Endothelial cell of umbilical vein (primary cell): ENCODE measurements at regions of chr1 and their contacts with region 1.

Region 1: DNA sequence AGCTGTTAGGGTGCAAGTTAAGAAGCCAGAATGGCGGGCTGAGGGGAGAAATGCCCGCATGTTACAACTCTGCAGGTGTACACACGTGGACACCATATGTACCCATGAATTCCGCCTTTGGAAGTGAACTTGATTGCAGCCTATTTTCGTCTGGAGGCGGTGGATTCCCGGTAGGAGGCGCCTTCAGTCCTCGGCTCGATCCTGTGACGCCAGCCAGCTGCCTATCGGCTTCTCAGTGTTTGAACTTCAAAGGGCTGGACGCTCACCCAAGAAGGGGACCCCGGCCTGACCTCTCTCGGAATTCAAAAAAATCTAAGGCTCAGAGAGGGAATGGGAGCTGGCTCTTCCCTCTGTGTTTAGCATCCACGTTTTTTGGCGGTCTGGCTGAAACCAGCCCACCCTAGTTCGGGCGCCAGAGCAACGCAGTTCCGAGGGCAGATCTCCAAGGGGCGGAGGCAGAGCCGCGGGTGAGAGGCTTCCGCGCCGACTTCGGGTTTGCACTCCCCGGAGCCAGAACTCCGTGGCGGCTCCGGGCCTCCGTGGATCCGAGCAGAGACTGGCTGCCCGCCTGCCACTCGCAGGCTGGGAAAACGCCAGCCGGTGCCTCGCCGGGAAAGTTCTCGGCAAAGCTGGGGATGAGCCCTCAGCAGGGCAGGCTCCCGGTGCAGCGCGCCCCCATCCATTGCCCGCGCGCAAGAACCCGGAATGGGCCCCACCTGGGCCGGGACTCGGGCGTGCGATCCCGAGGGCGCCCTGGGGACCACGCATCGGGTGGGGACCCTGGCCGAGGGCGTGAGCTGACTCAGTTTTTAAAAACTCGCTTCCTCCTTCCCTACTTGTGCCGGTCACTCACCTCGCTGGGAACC is 996 bp upstream of the TMEM51 start:
- DNase-seq: peak; percentile 89
- H3K4me3 ChIP-seq: peak overlapping the region; percentile 42 to 70 (median 53)
- H3K27ac ChIP-seq: peak overlapping the region; percentile 20
- H3K4me1 ChIP-seq: peaks cover 16% of the 10 kb centered on the region
- H3K27me3 ChIP-seq: peaks cover 9 to 12% of the 10 kb centered on the region in 2 experiments
- CTCF ChIP-seq: peak; percentile 71 to 81
- POLR2A ChIP-seq: no peak

Region 2: DNA sequence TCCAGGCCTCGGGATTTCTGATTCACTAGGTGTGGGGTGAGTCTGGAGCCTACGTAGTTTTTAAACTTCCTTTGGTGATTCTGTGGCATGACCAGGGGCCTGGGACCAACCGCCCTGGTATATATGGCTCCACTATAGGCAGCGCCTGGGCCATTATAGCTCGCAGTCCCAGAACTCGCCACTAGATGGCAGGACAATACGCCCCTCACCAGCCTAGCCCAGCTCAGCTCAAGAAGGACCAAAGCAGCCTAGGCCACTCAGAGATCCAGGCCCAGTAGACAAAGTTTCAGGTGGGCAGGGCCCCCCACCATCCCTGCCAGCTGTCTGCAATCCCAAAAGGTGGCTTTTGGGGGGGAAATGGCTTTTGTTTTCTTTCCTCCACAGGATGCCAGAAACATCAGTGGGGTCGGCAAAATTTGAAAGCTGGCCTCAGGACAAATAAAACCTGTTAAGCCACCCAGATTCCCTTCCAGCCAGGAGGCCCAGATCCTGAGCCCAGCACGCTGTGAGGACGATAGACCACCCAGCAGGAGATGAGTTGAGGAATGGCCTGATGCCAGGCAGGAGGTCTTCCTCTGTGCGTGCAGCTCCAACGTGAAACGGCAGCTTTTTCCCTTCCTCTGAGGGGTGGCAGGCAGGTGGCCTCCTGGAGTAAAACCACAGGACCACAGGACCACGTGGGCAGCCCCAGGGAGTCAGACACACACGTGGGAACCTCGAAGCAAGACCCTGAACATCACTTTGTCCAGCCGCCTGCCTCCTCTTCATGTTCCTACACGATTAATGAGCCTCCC is 23.8 kb before region 1 on chr1:
- CTCF ChIA-PET with region 1: interaction called, 77 read pairs
- POLR2A ChIA-PET with region 1: no interaction called
- dilution Hi-C with region 1: no loop called
- intact Hi-C with region 1: no loop called
- DNase-seq: peak; percentile 78
- H3K4me3 ChIP-seq: no peak overlapping the region
- H3K27ac ChIP-seq: no peak overlapping the region
- H3K4me1 ChIP-seq: no peaks in the 10 kb centered on the region
- H3K27me3 ChIP-seq: no peaks in the 10 kb centered on the region
- CTCF ChIP-seq: peak; percentile 92
- POLR2A ChIP-seq: no peak

Region 3: GRCh38 chr1:15196807-15197530 is 44.4 kb after region 1 on chr1:
- CTCF ChIA-PET with region 1: interaction called, 9 read pairs
- POLR2A ChIA-PET with region 1: no interaction called
- dilution Hi-C with region 1: no loop called
- intact Hi-C with region 1: loop called (anchors 1 kb)
- DNase-seq: no peak
- H3K4me3 ChIP-seq: no peak overlapping the region
- H3K27ac ChIP-seq: no peak overlapping the region
- H3K4me1 ChIP-seq: peaks cover 14% of the 10 kb centered on the region
- H3K27me3 ChIP-seq: no peaks in the 10 kb centered on the region
- CTCF ChIP-seq: no peak
- POLR2A ChIP-seq: no peak

Region 4: DNA sequence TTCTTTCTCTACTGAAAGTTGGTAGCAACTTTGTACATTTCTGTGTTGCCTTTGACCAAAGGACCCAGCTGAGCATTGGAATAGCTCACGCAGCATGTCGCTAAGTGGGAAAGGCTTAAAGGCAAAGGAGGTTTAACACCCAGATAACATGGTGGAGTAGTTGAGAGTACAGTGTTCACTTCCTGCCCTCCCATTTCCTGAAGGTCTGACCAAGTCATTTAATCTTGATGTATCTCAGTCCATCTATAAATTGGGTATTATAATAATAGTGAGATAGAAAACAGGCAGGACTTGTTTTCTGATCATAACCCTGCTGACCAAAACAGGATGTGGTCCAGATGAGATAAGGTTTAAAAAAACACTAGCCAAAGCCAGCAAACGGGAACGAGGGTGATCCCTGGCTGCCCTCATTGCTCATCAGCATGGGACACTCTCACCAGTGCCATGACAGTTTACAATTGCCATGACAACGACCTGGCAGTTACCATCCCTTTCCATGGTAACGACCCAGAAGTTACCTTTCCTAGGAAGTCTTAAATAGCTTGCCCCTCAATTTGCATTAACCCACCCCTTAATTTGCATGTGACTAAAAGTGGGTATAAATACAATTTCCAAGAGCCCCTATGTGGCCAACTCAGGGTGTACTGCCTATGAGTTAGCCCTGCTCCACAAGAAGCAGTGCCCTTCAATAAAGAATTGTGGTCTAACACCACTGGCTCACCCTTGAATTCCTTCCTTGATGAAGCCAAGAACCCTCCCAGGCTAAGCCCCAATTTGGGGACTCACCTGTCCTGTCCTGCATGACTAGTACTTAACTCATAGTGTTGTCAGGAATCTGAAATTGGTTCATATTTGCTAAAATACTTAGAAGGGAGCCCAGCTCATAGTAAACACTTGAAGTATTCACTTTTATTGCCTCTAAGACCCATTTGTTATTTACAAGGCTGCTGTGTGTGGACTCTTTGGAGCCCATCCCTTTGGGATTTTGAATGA is 66.0 kb after region 1 on chr1:
- CTCF ChIA-PET with region 1: interaction called, 10 read pairs
- POLR2A ChIA-PET with region 1: no interaction called
- dilution Hi-C with region 1: no loop called
- intact Hi-C with region 1: loop called (anchors 1 kb)
- DNase-seq: peak; percentile 98
- H3K4me3 ChIP-seq: no peak overlapping the region
- H3K27ac ChIP-seq: peak overlapping the region; percentile 42
- H3K4me1 ChIP-seq: peaks cover 15% of the 10 kb centered on the region
- H3K27me3 ChIP-seq: no peaks in the 10 kb centered on the region
- CTCF ChIP-seq: no peak
- POLR2A ChIP-seq: peak; percentile 54

Region 5: DNA sequence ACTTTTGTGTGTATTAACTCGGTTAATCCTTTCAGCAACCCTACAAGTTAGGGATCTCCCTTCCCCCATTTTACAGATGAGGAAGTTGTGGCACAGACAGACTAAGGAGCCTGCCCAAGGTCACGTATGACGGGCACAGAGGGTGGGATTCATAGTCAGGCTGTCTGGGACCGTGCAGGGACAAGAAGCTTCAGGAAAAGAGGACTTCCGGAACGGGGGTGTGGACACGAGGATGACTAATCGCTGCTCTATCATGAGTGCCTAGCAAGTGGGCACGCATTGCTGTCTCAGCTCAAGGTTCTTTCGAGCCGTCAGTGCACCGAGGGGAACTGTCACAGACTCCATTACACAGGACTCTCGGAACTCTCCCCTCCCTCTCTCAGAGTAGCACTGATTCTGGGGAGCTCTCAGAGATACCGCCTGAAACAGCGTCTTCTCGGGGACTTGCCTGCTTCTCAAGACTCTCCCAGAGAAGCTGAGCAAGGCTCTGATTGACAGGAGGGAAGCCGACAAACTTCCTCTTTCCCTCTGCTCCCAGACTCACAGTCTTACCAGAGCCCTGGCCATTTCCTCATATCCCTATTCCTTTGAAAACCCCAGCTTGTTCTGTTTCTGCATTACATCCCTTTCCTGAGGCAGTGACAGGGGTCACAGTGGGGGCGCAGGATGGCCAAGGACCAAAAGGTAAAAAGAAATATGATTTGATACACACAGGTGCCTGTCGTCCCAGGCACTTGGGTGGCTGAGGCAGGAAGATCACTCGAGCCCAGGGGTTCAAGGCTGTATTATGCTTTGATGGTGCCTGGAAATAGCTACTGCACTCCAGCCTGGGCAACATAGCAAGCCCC is 108.8 kb after region 1 on chr1:
- CTCF ChIA-PET with region 1: interaction called, 25 read pairs
- POLR2A ChIA-PET with region 1: no interaction called
- dilution Hi-C with region 1: no loop called
- intact Hi-C with region 1: loop called (anchors 1 kb)
- DNase-seq: peak; percentile 74
- H3K4me3 ChIP-seq: peak overlapping the region in 2 of 3 experiments; percentile 6 to 25
- H3K27ac ChIP-seq: peak overlapping the region; percentile 78
- H3K4me1 ChIP-seq: peaks cover 23% of the 10 kb centered on the region
- H3K27me3 ChIP-seq: peaks cover 0 to 5% of the 10 kb centered on the region in 2 experiments
- CTCF ChIP-seq: no peak
- POLR2A ChIP-seq: no peak

Region 6: GRCh38 chr1:15304701-15305467 is 152.3 kb after region 1 on chr1:
- CTCF ChIA-PET with region 1: interaction called, 21 read pairs
- POLR2A ChIA-PET with region 1: no interaction called
- dilution Hi-C with region 1: no loop called
- intact Hi-C with region 1: loop called (anchors 1 kb)
- DNase-seq: peak; percentile 49
- H3K4me3 ChIP-seq: no peak overlapping the region
- H3K27ac ChIP-seq: no peak overlapping the region
- H3K4me1 ChIP-seq: no peaks in the 10 kb centered on the region
- H3K27me3 ChIP-seq: no peaks in the 10 kb centered on the region
- CTCF ChIP-seq: peak; percentile 85 to 87
- POLR2A ChIP-seq: no peak

Region 7: GRCh38 chr1:15352123-15352957 is 199.8 kb after region 1 on chr1:
- CTCF ChIA-PET with region 1: no interaction called
- POLR2A ChIA-PET with region 1: no interaction called
- dilution Hi-C with region 1: no loop called
- intact Hi-C with region 1: no loop called
- DNase-seq: peak; percentile 81
- H3K4me3 ChIP-seq: no peak overlapping the region
- H3K27ac ChIP-seq: peak overlapping the region; percentile 73
- H3K4me1 ChIP-seq: peaks cover 20% of the 10 kb centered on the region
- H3K27me3 ChIP-seq: no peaks in the 10 kb centered on the region
- CTCF ChIP-seq: no peak
- POLR2A ChIP-seq: no peak

Region 8: DNA sequence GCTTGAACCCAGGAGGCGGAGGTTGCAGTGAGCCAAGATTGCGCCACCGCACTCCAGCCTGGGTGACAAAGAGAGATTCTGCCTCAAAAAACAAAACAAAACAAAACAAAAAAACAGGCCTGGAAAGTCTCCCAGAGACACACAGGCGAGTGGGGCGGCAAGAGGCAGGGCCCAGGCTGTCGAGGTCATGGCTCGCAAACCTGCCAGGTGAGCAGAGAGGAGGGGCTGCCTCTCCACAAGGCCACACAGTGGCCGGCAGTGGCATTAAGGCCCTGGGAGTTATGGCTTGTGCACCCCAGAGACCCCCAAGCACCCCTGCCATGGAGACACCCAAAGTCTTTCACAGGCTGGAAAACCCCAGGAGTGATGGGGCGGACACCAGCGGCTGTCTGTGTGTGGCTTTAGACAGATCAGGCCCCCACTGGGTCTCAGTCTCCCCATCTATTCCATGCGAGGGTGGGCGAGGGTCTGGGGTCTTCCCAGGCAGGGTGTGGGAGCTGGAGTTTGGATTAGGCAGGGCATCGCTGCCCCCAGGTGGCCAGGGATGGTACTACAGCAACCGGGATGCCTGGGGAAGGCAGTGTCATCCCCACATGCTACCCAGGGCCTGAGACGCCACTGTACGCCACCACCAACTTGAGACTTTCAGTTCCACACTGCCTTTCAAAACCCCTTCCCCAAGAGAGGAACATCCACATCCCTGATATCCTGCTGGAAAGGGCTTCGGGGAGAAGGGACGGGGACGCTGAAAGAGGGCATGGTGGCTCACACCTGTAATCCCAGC is 278.4 kb after region 1 on chr1:
- CTCF ChIA-PET with region 1: interaction called, 6 read pairs
- POLR2A ChIA-PET with region 1: no interaction called
- dilution Hi-C with region 1: no loop called
- intact Hi-C with region 1: loop called (anchors 1 kb)
- DNase-seq: peak; percentile 47
- H3K4me3 ChIP-seq: no peak overlapping the region
- H3K27ac ChIP-seq: no peak overlapping the region
- H3K4me1 ChIP-seq: no peaks in the 10 kb centered on the region
- H3K27me3 ChIP-seq: no peaks in the 10 kb centered on the region
- CTCF ChIP-seq: peak; percentile 86 to 90
- POLR2A ChIP-seq: no peak